AG04449 (cell line): ENCODE measurements at regions of chr1 and their contacts with region 1.

Region 1: GRCh38 chr1:62746085-62746808 is 37.7 kb upstream of the ATG4C start:
- DNase-seq: no peak
- H3K4me3 ChIP-seq: peak overlapping the region; percentile 47
- CTCF ChIP-seq: peak; percentile 28

Region 2: DNA sequence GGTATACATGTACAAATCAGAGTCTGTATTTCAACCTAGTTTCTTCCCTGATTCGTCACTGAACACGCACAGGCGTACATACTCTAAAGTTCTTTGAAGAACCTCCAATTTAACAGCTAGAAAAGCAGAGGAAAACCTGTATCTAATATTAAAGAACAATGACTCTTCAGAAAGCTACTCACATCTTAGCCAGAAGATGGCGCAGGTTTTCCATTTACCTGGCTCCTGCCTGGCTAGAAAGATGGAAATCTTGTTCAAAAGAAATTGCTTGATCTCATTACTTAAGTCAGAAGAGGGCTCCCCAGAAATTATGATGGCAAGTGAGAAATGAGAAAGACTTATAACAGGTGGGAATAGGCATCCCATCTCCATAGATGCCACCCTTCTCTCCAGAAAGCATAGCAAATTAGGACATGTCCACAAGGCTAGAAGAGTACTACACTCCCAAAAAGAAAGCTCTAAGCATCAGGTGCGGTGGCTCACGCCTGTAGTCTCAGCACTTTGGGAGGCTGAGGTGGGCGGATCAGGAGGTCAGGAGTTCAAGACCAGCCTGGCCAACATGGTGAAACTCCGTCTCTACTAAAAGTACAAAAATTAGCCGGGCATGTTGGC is 570.6 kb before region 1 on chr1:
- CTCF ChIA-PET with region 1: interaction called, 15 read pairs
- POLR2A ChIA-PET with region 1: no interaction called
- DNase-seq: no peak
- H3K4me3 ChIP-seq: no peak overlapping the region
- CTCF ChIP-seq: peak; percentile 67

Region 3: DNA sequence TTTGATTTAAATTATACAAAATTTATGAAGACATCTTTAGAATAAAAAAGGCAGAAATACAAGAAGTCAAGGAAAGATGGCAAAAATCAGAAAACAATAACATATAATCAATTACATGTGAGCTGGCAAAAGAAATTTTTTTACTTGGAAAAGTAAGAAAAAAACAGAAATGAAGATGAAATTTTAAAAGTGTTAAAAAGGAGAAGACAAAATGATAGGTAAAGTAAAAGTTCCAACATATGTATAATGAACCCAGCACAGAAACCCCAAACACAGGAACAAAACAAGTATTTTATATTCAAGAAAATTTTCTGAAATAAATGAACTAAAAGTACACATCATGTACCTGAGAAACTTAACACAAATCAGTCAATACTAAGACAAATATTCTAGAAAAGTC is 246.0 kb before region 1 on chr1:
- CTCF ChIA-PET with region 1: interaction called, 166 read pairs
- POLR2A ChIA-PET with region 1: no interaction called
- DNase-seq: no peak
- H3K4me3 ChIP-seq: no peak overlapping the region
- CTCF ChIP-seq: no peak

Region 4: GRCh38 chr1:62514746-62515423 is 231.4 kb before region 1 on chr1:
- CTCF ChIA-PET with region 1: interaction called, 166 read pairs
- POLR2A ChIA-PET with region 1: no interaction called
- DNase-seq: no peak
- H3K4me3 ChIP-seq: no peak overlapping the region
- CTCF ChIP-seq: no peak

Region 5: DNA sequence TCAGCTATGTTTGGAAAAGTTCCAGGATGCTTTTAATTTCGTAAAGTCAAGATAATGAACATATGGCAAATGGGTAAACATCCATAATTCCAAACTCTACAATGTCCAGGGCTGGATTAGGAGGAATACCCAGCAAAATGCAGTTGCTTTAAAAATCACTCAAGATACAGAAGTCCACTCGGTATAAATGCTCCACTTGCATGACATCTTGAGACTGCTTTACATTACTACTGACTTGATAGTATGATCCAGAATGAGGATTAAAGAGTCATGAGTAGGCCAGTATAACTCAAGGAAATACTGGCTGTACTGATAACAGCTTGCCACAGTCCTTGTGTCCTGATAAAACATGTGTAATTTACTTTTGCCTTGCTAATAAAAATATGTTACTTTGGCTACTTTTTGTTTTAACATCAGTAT is 207.2 kb before region 1 on chr1:
- CTCF ChIA-PET with region 1: interaction called, 20 read pairs
- POLR2A ChIA-PET with region 1: no interaction called
- DNase-seq: no peak
- H3K4me3 ChIP-seq: no peak overlapping the region
- CTCF ChIP-seq: no peak